ENCODE measurements at regions of chr6 and their contacts with region 1.

Region 1: GRCh38 chr6:45377554-45378333 is at the start of gene SUPT3H:
- DNase-seq: peak; percentile 94

Region 2: GRCh38 chr6:44999066-44999465 is 378.7 kb before region 1 on chr6:
- CTCF ChIA-PET with region 1: no interaction called
- POLR2A ChIA-PET with region 1: no interaction called
- DNase-seq: no peak

Region 3: GRCh38 chr6:45344900-45345299 is 32.8 kb before region 1 on chr6:
- CTCF ChIA-PET with region 1: no interaction called
- POLR2A ChIA-PET with region 1: interaction called, 12 read pairs
- DNase-seq: no peak

Region 4: DNA sequence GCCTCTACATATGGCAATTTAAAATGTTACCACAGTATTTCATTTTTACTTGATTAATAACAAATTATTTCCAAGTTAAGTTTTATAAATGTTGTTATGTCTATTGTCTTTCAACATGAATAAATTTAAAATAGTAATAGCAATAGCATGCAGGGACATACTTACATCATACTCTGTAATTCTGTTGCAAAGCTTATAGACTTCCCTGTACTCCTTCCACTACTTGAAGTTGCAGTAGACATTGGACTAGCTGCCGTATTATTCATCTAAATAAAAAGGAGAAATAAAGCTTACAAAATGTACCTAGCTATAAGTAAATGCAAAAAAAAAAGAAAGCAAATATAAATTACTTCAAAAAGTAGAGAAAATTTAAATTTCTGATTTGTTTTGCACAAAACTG is 12.7 kb before region 1 on chr6:
- CTCF ChIA-PET with region 1: interaction called, 3 read pairs
- POLR2A ChIA-PET with region 1: interaction called, 11 read pairs
- DNase-seq: no peak

Region 5: DNA sequence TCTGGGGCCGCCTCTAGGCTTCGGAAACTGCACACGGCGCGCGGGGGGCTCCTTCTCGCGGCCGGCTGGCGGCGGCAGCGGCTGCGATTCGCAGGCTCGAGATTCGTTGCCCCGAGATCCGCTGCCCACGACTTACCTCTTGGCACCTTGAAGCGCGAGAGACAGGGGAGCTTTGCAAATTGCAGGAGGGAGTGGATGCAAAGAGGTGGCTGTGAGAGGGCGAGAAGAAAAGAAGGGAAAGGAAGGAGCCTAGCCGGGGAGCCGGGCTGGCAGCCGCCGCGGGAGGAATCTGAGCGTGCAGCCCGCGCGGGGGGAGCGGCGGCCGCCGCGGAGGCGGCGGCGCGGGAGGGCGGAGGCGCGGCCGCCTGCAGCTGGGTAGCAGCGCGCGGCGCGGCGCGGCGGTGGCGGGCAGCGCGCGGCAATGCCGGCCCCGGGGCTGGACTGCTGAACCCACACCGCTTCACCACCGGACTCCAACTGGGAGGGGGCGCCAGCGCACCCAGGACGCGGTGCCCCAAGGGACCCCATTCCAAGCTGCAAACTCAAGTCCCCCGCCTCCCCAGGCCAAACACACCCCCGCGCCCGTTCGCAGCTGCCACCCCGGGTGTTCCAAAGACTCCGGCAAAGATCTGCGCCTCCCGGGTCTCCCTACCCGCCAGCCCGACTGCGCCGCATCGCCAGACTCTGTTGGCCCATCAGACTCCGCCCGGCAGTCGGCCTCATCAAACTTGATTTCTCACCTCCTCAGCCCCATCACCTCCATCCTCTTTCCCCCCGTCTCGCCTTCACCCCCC is 44.2 kb after region 1 on chr6:
- CTCF ChIA-PET with region 1: no interaction called
- POLR2A ChIA-PET with region 1: interaction called, 33 read pairs
- DNase-seq: peak; percentile 59

Region 6: GRCh38 chr6:45558858-45559257 is 181.1 kb after region 1 on chr6:
- CTCF ChIA-PET with region 1: no interaction called
- POLR2A ChIA-PET with region 1: no interaction called
- DNase-seq: no peak

Region 7: DNA sequence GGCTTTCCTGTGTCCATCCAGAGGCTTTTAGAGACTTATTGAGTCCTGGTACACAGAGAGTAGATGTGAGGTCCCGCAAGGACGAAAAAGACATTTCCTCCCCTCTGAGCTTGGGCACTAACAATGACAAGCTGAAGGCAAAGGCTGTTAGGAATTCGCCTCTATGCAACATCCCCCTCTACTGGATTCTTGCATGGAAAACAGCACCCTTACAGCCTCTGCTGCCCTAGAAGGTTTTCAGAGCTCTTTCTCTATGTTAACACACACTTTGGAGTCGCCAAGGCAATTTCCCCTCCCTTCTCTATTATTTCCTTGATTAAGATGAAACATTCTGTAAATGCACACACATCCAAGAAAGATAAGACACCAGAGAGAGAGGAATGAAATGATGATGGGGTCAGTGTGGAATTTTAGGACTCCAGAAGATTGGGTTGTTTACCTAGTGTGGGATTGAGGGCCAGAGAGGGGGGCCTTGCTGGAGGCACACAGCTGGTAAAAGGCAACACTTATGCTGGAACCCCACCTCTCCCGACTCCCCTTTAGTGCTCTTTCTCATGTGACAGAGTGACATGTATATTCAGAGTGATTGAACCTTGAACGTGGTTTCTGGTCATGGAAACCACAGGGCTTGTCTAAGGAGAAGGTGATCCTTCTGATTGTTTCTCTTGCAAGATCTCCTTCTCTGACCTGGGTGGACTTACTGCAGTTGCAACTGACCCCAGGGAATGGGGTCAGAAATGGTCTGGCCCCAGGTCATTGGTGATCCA is 337.2 kb after region 1 on chr6:
- CTCF ChIA-PET with region 1: interaction called, 3 read pairs
- POLR2A ChIA-PET with region 1: interaction called, 12 read pairs
- DNase-seq: peak; percentile 76